CD8-positive, alpha-beta T cell (primary cell): ENCODE measurements at regions of chr12 and their contacts with region 1.

Region 1: DNA sequence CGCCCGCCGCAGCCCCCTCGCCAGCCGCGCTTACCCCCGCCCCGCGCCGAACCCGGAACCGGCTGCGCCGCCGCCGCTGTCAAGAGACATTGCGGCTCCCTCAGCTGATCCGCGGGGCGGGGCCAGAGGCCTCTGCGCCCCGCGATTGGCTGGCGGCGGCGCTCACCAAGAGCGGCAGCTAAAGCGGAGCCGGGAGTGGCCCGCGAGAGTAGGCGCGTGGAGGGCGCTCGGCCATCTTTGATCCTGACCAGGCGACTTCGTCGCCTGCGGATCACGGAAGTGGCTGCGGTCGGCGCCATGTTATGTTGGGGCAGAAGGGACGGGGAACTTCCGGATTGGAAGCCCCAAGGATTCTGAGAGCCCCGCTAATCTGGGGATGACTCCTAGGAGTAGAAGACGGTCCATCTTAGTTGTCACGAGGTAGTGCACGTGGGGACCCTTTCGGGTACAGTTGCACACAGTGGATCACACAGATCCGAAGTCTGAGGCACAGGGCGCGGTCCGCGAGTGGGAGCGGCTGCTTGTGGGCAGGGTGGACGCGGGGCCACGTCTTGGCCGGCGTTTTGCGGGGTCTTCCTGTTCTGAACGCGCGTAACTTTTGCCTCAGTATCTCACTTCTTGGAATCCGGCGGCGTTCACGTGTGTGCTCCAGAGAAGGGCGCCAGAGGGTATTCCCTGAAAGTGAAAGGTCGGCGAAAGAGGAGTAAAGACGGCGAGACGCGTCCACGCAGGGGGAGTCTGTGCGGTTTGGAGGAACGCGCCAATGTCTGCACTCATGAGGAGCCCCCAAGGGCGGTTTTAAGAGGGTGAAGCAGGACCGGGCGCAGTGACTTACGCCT is at the start of gene CHFR:
- DNase-seq: peak; percentile 86 to 98 (median 93)
- ATAC-seq: peak; percentile 98
- H3K4me3 ChIP-seq: peak within 1 kb of the TSS; percentile 79 to 86
- H3K4me3 Mint-ChIP-seq: peak within 1 kb of the TSS; percentile 97
- H3K27ac ChIP-seq: peak within 1 kb of the TSS; percentile 92 to 99
- H3K27ac Mint-ChIP-seq: peak within 1 kb of the TSS; percentile 100
- H3K4me1 ChIP-seq: peaks cover 23% of the 10 kb centered on the region
- H3K4me1 Mint-ChIP-seq: peaks cover 34% of the 10 kb centered on the region
- H3K27me3 ChIP-seq: no peaks in the 10 kb centered on the region
- H3K27me3 Mint-ChIP-seq: no peaks in the 10 kb centered on the region
- CTCF ChIP-seq: no peak
- total RNA-seq, gene CHFR: 70.6 to 81.1 TPM

Region 2: GRCh38 chr12:132687208-132688164 is 200.2 kb before region 1 on chr12 and contains the starts of genes POLE and PXMP2:
- CTCF ChIA-PET with region 1: no interaction called
- POLR2A ChIA-PET with region 1: no interaction called
- intact Hi-C with region 1: loop called (anchors 1 to 5 kb)
- DNase-seq: peak; percentile 88 to 98 (median 94)
- ATAC-seq: peak; percentile 95
- H3K4me3 ChIP-seq: peak within 1 kb of the TSS; percentile 38 to 58
- H3K4me3 Mint-ChIP-seq: peak within 1 kb of the TSS; percentile 82
- H3K27ac ChIP-seq: peak within 1 kb of the TSS in 1 of 2 experiments; percentile 27
- H3K27ac Mint-ChIP-seq: peak within 1 kb of the TSS; percentile 55
- H3K4me1 ChIP-seq: peaks cover 7% of the 10 kb centered on the region
- H3K4me1 Mint-ChIP-seq: peaks cover 14% of the 10 kb centered on the region
- H3K27me3 ChIP-seq: no peaks in the 10 kb centered on the region
- H3K27me3 Mint-ChIP-seq: no peaks in the 10 kb centered on the region
- CTCF ChIP-seq: no peak
- total RNA-seq, gene POLE: 25.9 to 31.1 TPM
- total RNA-seq, gene PXMP2: 1.2 to 1.8 TPM

Region 3: GRCh38 chr12:132828706-132829534 is 58.8 kb before region 1 on chr12 and contains the start of gene GOLGA3:
- CTCF ChIA-PET with region 1: no interaction called
- POLR2A ChIA-PET with region 1: interaction called, 14 read pairs
- intact Hi-C with region 1: loop called (anchors 1 kb)
- DNase-seq: peak; percentile 87 to 98 (median 96)
- ATAC-seq: peak; percentile 91
- H3K4me3 ChIP-seq: peak within 1 kb of the TSS; percentile 92
- H3K4me3 Mint-ChIP-seq: peak within 1 kb of the TSS; percentile 96
- H3K27ac ChIP-seq: peak within 1 kb of the TSS; percentile 100
- H3K27ac Mint-ChIP-seq: peak within 1 kb of the TSS; percentile 100
- H3K4me1 ChIP-seq: peaks cover 29% of the 10 kb centered on the region
- H3K4me1 Mint-ChIP-seq: peaks cover 56% of the 10 kb centered on the region
- H3K27me3 ChIP-seq: no peaks in the 10 kb centered on the region
- H3K27me3 Mint-ChIP-seq: no peaks in the 10 kb centered on the region
- CTCF ChIP-seq: no peak
- total RNA-seq, gene GOLGA3: 31.7 to 33.8 TPM

Region 4: GRCh38 chr12:132872975-132873421 is 14.7 kb before region 1 on chr12:
- CTCF ChIA-PET with region 1: no interaction called
- POLR2A ChIA-PET with region 1: interaction called, 16 read pairs
- intact Hi-C with region 1: loop called in 1 of 2 experiments (anchors 2 kb)
- DNase-seq: peak in 7 of 9 experiments; percentile 24 to 70 (median 40)
- ATAC-seq: peak; percentile 66
- H3K4me3 ChIP-seq: peak overlapping the region in 1 of 2 experiments; percentile 15
- H3K4me3 Mint-ChIP-seq: peak overlapping the region; percentile 75
- H3K27ac ChIP-seq: peak overlapping the region; percentile 36 to 43
- H3K27ac Mint-ChIP-seq: peak overlapping the region; percentile 94
- H3K4me1 ChIP-seq: peaks cover 21% of the 10 kb centered on the region
- H3K4me1 Mint-ChIP-seq: peaks cover 25% of the 10 kb centered on the region
- H3K27me3 ChIP-seq: no peaks in the 10 kb centered on the region
- H3K27me3 Mint-ChIP-seq: no peaks in the 10 kb centered on the region
- CTCF ChIP-seq: no peak

Region 5: GRCh38 chr12:132986001-132986912 is 98.5 kb after region 1 on chr12 and contains the start of gene ZNF26:
- CTCF ChIA-PET with region 1: no interaction called
- POLR2A ChIA-PET with region 1: interaction called, 3 read pairs
- intact Hi-C with region 1: loop called in 1 of 2 experiments (anchors 1 kb)
- DNase-seq: peak; percentile 70 to 96 (median 88)
- ATAC-seq: peak; percentile 96
- H3K4me3 ChIP-seq: peak within 1 kb of the TSS; percentile 90 to 98
- H3K4me3 Mint-ChIP-seq: peak within 1 kb of the TSS; percentile 93
- H3K27ac ChIP-seq: peak within 1 kb of the TSS; percentile 89 to 93
- H3K27ac Mint-ChIP-seq: peak within 1 kb of the TSS; percentile 94
- H3K4me1 ChIP-seq: peaks cover 18% of the 10 kb centered on the region
- H3K4me1 Mint-ChIP-seq: peaks cover 35% of the 10 kb centered on the region
- H3K27me3 ChIP-seq: no peaks in the 10 kb centered on the region
- H3K27me3 Mint-ChIP-seq: peaks cover 2% of the 10 kb centered on the region
- CTCF ChIP-seq: no peak
- total RNA-seq, gene ZNF26: 44.8 to 45.5 TPM